Vagina (tissue), 2 donors: ENCODE measurements at regions of chr17 and their contacts with region 1.

Region 1: GRCh38 chr17:10899281-10899680 is 61.4 kb upstream of the PIRT start:
- DNase-seq: no peak
- H3K4me3 ChIP-seq: no peak overlapping the region
- H3K27ac ChIP-seq: no peak overlapping the region
- H3K4me1 ChIP-seq: no peaks in the 10 kb centered on the region
- H3K27me3 ChIP-seq: no peaks in the 10 kb centered on the region
- CTCF ChIP-seq: no peak
- POLR2A ChIP-seq: no peak

Region 2: GRCh38 chr17:10857976-10858375 is 41.3 kb before region 1 on chr17:
- intact Hi-C with region 1: no loop called
- DNase-seq: no peak
- H3K4me3 ChIP-seq: no peak overlapping the region
- H3K27ac ChIP-seq: no peak overlapping the region
- H3K4me1 ChIP-seq: no peaks in the 10 kb centered on the region
- H3K27me3 ChIP-seq: no peaks in the 10 kb centered on the region
- CTCF ChIP-seq: no peak
- POLR2A ChIP-seq: no peak

Region 3: DNA sequence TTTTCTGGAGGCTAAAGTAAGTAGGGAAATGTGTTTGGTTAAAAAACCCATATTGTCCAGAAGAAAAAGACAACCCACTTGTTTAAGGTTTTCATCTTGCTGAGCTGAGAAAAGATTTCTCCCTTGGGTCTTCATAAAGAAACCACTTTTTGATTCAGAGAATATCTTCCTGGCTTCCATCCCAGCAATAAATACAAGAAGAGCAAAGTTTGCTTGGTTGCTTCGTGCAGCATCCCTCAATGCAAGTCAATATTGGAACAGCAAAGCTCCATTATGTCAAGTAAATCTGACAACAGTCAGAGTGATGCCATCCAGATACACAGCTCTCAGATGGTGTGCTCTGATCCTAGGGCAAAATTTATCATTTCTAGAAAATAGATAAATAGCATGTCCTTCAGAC is 57.5 kb after region 1 on chr17:
- intact Hi-C with region 1: loop called (anchors 10 kb)
- DNase-seq: no peak
- H3K4me3 ChIP-seq: no peak overlapping the region
- H3K27ac ChIP-seq: no peak overlapping the region
- H3K4me1 ChIP-seq: no peaks in the 10 kb centered on the region
- H3K27me3 ChIP-seq: no peaks in the 10 kb centered on the region
- CTCF ChIP-seq: no peak
- POLR2A ChIP-seq: no peak